Stomach (tissue), 19 donors: ENCODE measurements at regions of chr3 and their contacts with region 1.

Region 1: DNA sequence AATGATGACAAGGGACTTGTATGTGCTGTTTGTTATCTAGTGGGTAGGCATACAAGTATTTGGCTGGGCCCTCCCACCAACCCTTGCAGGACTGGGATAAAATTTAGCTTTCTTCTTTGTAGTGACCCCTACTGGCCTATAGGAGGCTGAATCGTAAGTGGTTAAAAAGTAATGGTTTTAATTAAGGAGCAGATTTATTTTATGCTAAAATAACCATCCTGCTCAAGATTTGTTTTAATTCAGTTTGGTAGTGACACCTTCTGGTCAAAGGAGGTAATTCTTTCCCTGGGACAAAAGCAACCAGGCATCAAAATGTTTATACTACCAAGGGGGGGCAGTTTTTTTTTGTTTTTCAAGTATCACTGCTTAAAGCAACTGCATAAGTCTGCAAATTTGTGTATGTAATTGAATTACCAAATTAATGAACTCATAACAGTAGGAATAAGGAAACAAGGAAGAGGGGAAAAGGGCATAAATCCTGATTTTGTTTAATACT is 70.7 kb downstream of the TOP2B start:
- DNase-seq: peak in 1 of 2 donors; percentile 81
- H3K4me3 ChIP-seq: no peak overlapping the region
- H3K27ac ChIP-seq: peak overlapping the region in 1 of 5 donors; percentile 25
- H3K4me1 ChIP-seq: peaks cover 14 to 66% (median 37%) of the 10 kb centered on the region in 4 donors
- H3K27me3 ChIP-seq: no peaks in the 10 kb centered on the region
- CTCF ChIP-seq: peak in 5 of 7 experiments; percentile 76 to 83 (median 80)
- EP300 ChIP-seq: no peak
- POLR2A ChIP-seq: no peak

Region 2: DNA sequence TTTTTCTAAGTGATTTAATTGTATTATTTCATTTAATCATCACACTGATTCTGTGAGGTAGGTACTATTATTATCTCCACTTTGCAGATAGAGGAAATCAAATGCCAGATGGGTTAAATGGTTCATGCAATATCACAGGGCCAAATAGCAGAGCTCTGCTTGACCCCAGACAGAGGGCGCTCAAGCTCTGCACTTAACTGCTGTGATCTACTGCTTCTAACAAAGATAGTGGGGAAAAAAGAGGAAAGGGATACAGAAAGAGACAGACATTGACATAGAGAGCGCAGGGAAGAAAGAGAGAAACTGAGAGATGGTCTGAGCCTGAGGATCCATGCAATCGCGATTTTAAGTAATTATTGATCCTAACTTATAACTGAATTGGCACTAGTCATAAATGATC is 820.3 kb before region 1 on chr3:
- intact Hi-C with region 1: loop called (anchors 10 kb)
- DNase-seq: peak; percentile 37 to 91
- H3K4me3 ChIP-seq: no peak overlapping the region
- H3K27ac ChIP-seq: no peak overlapping the region
- H3K4me1 ChIP-seq: no peaks in the 10 kb centered on the region
- H3K27me3 ChIP-seq: no peaks in the 10 kb centered on the region
- CTCF ChIP-seq: peak in 5 of 7 experiments; percentile 35 to 63 (median 57)
- EP300 ChIP-seq: no peak
- POLR2A ChIP-seq: no peak

Region 3: GRCh38 chr3:24963762-24964625 is 630.1 kb before region 1 on chr3:
- intact Hi-C with region 1: loop called (anchors 10 kb)
- DNase-seq: peak in 1 of 2 donors; percentile 67
- H3K4me3 ChIP-seq: no peak overlapping the region
- H3K27ac ChIP-seq: no peak overlapping the region
- H3K4me1 ChIP-seq: no peaks in the 10 kb centered on the region
- H3K27me3 ChIP-seq: no peaks in the 10 kb centered on the region
- CTCF ChIP-seq: peak in 4 of 7 experiments; percentile 13 to 50 (median 40)
- EP300 ChIP-seq: no peak
- POLR2A ChIP-seq: no peak

Region 4: GRCh38 chr3:25156626-25157025 is 437.4 kb before region 1 on chr3:
- intact Hi-C with region 1: no loop called
- DNase-seq: peak in 1 of 2 donors; percentile 48
- H3K4me3 ChIP-seq: no peak overlapping the region
- H3K27ac ChIP-seq: no peak overlapping the region
- H3K4me1 ChIP-seq: peaks cover 0 to 6% (median 0%) of the 10 kb centered on the region in 4 donors
- H3K27me3 ChIP-seq: no peaks in the 10 kb centered on the region
- CTCF ChIP-seq: no peak
- EP300 ChIP-seq: no peak
- POLR2A ChIP-seq: no peak

Region 5: DNA sequence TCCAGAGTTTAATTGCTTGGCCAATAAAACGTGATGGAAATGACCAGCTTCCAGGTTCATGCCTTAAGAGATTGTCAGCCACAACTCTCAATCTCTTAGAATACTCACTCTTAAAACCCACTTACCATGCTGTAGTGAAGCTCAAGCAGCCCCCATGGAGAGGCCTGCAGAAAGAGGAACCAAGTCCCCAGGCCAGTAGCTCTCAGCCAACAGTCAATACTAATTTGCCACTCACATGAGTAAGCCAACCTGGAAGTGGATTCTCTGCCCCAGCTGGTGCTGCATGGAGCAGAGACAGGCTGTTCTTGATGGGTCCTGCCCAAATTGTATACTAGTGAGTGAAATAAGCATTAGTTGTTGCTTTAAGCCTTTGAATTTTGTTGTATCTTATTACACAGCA is 351.8 kb after region 1 on chr3:
- intact Hi-C with region 1: no loop called
- DNase-seq: no peak
- H3K4me3 ChIP-seq: no peak overlapping the region
- H3K27ac ChIP-seq: no peak overlapping the region
- H3K4me1 ChIP-seq: no peaks in the 10 kb centered on the region
- H3K27me3 ChIP-seq: no peaks in the 10 kb centered on the region
- CTCF ChIP-seq: no peak
- EP300 ChIP-seq: no peak
- POLR2A ChIP-seq: no peak